Tibial artery (tissue), 4 donors: ENCODE measurements at regions of chr21 and their contacts with region 1.

Region 1: DNA sequence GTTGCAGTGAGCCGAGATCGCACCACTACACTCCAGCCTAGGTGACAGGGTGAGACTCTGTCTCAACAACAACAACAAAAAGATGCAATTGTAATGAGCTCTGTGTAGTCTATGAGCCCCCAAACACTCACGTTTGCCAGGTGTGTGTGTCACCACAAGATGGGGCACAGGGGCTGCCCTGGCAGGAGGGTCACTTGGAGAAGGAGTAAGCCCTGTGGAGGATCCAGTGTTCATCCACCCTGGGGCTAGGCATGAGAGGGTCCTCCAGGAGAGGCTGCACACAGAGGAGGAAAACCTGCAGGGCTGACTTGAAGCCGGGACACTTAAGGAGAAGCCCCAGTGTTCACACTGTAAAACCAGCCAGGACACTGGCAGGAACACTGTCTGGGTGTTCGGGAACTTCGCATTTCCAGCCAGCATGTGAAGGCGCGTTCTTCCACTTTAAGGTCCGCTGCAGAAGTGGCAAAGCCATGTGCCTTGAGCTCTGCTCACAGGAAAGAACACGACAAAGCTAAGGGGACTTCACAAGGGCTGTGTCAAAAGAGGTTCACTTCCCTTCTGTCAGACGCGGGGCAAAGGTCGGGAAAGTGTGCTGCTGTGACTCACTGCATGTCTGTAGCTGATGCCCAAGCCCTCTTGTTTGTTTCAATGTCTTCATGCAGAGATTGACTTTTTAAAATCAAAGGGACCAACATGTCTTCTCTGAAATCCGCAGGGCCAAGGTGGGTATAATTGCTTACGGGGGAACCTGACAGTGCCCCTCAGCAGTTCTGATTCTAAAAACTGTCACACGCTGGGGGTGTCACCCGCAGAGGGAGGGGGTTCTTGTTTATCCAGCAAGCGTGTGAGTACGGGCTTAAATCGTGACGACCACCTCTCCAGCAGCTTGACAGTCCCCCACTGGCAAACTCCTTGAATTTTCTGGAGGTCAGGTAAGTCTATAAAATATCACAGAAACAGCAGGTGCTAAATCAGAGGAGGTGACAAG is 102.8 kb downstream of the RIPK4 start:
- DNase-seq: peak in 1 of 2 donors; percentile 66
- H3K4me3 ChIP-seq: peak overlapping the region in 1 of 2 donors; percentile 4
- H3K27ac ChIP-seq: peak overlapping the region; percentile 73 to 78
- H3K4me1 ChIP-seq: peaks cover 9 to 48% (median 35%) of the 10 kb centered on the region in 4 donors
- H3K27me3 ChIP-seq: no peaks in the 10 kb centered on the region
- CTCF ChIP-seq: no peak

Region 2: DNA sequence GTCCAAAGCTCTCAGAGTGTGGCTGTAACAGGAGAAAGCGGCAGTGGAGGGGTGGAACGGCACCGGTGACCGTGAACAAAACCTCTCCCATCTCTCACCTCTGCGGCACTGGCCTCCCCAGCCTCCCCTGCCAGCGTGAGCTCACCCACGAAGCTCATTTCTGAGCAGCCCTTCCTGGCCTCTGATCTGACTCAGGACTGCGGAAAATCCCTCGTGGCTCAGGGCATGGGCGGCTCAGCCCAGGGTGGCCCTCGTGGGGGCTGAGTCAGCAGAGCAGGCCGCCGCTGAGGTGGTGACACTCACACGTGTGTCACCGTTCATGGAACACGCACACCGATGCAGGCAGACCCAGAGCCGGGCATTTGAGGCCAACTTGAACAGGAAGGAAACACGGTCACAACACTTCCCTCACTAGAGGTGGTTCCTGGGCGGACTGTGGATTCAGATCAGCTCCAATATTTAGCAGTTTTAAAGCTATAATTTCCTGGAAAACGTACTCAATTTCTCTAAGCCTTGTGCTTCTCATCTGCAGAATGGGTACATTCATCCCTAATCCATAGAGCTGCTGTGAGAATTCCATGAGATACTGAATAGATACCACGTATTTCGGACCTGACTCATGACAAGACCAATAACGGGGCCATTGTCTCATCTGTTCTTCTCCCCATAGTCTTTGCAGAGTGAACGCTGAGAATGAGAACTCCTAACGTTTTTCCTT is 41.1 kb before region 1 on chr21:
- intact Hi-C with region 1: loop called (anchors 5 kb)
- DNase-seq: no peak
- H3K4me3 ChIP-seq: no peak overlapping the region
- H3K27ac ChIP-seq: no peak overlapping the region
- H3K4me1 ChIP-seq: no peaks in the 10 kb centered on the region
- H3K27me3 ChIP-seq: no peaks in the 10 kb centered on the region
- CTCF ChIP-seq: no peak

Region 3: DNA sequence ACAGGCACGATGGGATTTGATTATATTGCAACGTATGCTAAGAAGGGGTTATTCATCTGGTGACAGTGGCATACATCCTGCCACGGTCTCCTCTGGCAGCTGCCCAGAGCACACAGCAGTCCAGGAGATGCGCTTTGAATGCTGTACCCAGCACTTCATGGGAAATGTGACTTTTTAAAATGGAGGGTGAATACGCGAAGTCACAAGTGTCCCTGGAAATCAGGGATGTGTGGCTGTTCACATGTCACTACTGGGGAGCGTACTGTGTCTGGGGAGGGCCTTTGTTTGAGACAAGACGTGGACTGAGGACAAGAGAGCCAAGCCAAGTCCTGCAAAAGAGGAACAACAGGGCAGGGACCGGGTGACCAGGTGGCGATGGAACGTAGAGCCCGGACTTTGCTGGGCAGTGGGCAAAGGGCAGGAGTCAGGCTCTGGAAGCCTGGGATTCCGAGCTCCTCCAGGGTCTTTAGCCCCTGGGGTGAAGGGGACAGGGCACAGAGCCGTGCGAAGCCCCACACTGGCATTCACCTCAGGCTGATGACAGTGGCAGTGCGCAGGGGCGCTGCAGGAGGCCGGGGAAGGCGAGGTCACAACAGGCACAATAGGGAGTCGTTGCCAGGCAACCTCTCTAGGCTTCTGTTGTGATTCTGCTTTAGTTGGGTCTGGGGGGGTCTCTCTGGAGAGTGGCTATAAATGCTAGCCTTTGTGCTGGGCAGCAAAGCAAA is 357.4 kb after region 1 on chr21:
- intact Hi-C with region 1: no loop called
- DNase-seq: peak in 1 of 2 donors; percentile 48
- H3K4me3 ChIP-seq: no peak overlapping the region
- H3K27ac ChIP-seq: no peak overlapping the region
- H3K4me1 ChIP-seq: no peaks in the 10 kb centered on the region
- H3K27me3 ChIP-seq: peaks cover 0 to 14% of the 10 kb centered on the region in 2 donors
- CTCF ChIP-seq: no peak